Breast epithelium (tissue), 4 donors: ENCODE measurements at regions of chr11 and their contacts with region 1.

Region 1: DNA sequence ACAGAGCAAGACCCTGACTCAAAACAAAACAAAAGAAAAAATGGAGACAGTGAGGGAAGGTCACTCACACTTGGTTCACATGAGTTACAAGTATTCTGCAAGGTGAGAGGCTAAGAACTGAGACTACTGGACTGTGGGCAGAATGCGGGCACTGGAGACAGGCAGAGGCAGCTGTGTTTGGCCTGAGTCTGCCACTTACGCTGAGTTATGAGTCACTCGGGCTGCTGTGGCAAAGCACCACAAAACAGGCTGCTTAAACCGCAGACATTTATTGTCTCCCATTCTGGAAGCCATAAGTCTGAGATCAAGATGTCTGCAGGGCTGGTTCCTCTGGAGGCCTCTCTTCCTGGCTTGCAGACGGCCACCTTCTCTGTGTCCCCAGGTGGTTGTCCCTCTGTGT is 122.8 kb downstream of the SHANK2 start:
- DNase-seq: peak in 1 of 2 donors; percentile 35
- H3K4me3 ChIP-seq: no peak overlapping the region
- H3K27ac ChIP-seq: no peak overlapping the region
- H3K4me1 ChIP-seq: no peaks in the 10 kb centered on the region
- H3K27me3 ChIP-seq: no peaks in the 10 kb centered on the region
- CTCF ChIP-seq: no peak
- POLR2A ChIP-seq: no peak

Region 2: DNA sequence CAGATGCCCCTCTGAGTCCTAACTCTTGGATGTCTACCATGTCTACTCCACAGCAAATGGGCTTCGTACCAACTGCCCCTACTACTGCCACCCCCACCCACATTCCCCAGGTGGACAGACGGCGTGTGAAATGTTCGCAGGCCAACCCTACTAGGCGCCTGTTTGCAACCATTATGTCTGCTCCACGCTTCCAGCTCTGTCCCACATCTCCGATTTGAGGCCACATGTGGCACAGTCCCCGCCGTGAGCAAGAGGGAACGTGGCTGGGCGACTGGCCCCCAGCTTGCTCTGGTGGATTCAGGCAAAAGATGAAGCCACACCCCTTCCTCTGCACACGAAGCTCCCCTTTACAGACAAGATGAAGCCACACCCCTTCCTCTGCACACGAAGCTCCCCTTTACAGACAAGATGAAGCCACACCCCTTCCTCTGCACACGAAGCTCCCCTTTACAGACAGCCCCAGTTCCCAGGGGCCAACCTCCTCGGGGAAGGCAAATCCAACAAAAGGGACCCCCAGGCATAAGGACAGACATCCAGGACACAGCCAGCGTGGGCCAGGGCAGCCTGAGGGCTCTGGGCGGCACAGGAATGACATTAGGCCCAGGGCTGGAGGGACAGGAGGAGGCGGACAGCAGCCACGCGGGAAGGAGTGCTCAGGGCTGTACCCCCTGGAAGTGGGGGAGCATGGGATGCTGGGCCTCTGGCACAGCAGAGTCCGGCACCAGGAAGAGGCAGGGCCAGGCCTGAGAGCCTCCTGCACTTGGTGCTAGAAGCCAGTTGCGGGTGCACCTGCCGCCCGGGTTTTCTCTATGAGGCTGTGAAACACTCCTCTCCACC is 16.6 kb after region 1 on chr11:
- intact Hi-C with region 1: no loop called
- DNase-seq: no peak
- H3K4me3 ChIP-seq: no peak overlapping the region
- H3K27ac ChIP-seq: no peak overlapping the region
- H3K4me1 ChIP-seq: no peaks in the 10 kb centered on the region
- H3K27me3 ChIP-seq: no peaks in the 10 kb centered on the region
- CTCF ChIP-seq: no peak
- POLR2A ChIP-seq: no peak

Region 3: GRCh38 chr11:71165771-71166170 is 36.1 kb after region 1 on chr11:
- intact Hi-C with region 1: no loop called
- DNase-seq: no peak
- H3K4me3 ChIP-seq: no peak overlapping the region
- H3K27ac ChIP-seq: no peak overlapping the region
- H3K4me1 ChIP-seq: no peaks in the 10 kb centered on the region
- H3K27me3 ChIP-seq: no peaks in the 10 kb centered on the region
- CTCF ChIP-seq: no peak
- POLR2A ChIP-seq: no peak

Region 4: DNA sequence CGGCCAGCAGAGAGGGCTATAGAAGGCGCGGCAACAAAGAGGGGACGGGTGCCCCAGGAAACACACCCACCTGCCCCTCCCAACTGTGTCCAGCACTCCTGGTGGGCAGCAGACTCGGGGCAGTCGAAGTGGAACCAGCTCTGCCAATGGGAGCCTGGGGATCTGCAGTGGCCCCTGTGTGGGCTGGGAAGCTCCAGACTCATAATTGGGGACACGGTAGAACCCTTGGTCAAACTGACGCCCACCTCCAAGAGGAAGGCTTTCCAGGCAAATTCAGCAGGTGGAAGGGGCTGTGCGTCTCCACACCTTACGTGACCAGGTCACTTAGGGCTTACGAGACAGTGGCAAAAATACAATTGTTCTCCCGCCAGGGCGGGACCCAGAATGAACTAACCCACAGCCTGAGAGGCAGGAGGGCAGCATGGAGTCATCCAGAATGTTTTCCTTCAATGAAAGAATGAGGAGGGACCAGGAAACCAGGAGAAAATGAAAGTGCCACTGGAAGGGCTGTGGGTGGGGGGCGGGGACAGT is 175.9 kb after region 1 on chr11:
- intact Hi-C with region 1: loop called (anchors 5 kb)
- DNase-seq: peak in 1 of 2 donors; percentile 30
- H3K4me3 ChIP-seq: no peak overlapping the region
- H3K27ac ChIP-seq: no peak overlapping the region
- H3K4me1 ChIP-seq: no peaks in the 10 kb centered on the region
- H3K27me3 ChIP-seq: no peaks in the 10 kb centered on the region
- CTCF ChIP-seq: no peak
- POLR2A ChIP-seq: no peak